ENCODE measurements at regions of chr6 and their contacts with region 1.

Region 1: GRCh38 chr6:170522565-170523183 is 30.4 kb downstream of the PSMB1 start:
- DNase-seq: no peak
- H3K4me3 ChIP-seq: no peak overlapping the region
- H3K27ac ChIP-seq: no peak overlapping the region
- H3K4me1 ChIP-seq: no peaks in the 10 kb centered on the region
- H3K27me3 ChIP-seq: no peaks in the 10 kb centered on the region
- CTCF ChIP-seq: no peak
- EP300 ChIP-seq: no peak
- POLR2A ChIP-seq: no peak

Region 2: GRCh38 chr6:169824848-169825557 is 697.7 kb before region 1 on chr6:
- intact Hi-C with region 1: loop called in 3 of 4 experiments (anchors 5 to 10 kb)
- DNase-seq: peak in 1 of 5 donors; percentile 9
- H3K4me3 ChIP-seq: no peak overlapping the region
- H3K27ac ChIP-seq: no peak overlapping the region
- H3K4me1 ChIP-seq: no peaks in the 10 kb centered on the region
- H3K27me3 ChIP-seq: no peaks in the 10 kb centered on the region
- CTCF ChIP-seq: no peak
- EP300 ChIP-seq: no peak
- POLR2A ChIP-seq: no peak

Region 3: GRCh38 chr6:170584181-170584953 is 61.7 kb after region 1 on chr6 and contains the start of gene PDCD2:
- intact Hi-C with region 1: no loop called
- DNase-seq: peak; percentile 85 to 92 (median 86)
- H3K4me3 ChIP-seq: peak within 1 kb of the TSS; percentile 92
- H3K27ac ChIP-seq: peak within 1 kb of the TSS in 1 of 2 donors; percentile 71
- H3K4me1 ChIP-seq: no peaks in the 10 kb centered on the region
- H3K27me3 ChIP-seq: no peaks in the 10 kb centered on the region
- CTCF ChIP-seq: no peak
- EP300 ChIP-seq: no peak
- POLR2A ChIP-seq: peak; percentile 35
- total RNA-seq, gene PDCD2: 37.4 to 66.2 (median 51.2) TPM

Measured in ovary (tissue), 10 donors.